Tibial artery (tissue), 4 donors: ENCODE measurements at regions of chr1 and their contacts with region 1.

Region 1: DNA sequence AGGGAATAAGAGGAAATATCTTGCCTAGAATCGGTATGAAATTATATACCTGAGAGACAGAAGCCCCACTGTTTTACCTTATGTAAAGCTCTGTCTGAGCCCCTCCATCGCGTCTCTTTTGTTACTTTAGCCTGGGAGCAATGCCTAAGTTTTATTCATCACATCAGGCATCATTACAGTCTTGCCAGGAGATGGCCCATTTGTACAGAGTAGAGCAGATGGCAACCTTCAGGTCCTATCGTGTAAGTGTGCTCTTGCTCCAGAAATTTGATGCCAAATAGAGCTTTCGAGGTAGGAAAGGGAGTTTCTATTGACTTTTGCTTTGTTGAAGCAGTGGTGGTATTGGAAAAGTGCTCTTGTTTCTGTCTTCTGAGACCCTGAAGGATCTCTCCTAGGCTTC is 24.9 kb downstream of the CFAP126 start:
- DNase-seq: no peak
- H3K4me3 ChIP-seq: no peak overlapping the region
- H3K27ac ChIP-seq: no peak overlapping the region
- H3K4me1 ChIP-seq: no peaks in the 10 kb centered on the region
- H3K27me3 ChIP-seq: no peaks in the 10 kb centered on the region
- CTCF ChIP-seq: no peak

Region 2: DNA sequence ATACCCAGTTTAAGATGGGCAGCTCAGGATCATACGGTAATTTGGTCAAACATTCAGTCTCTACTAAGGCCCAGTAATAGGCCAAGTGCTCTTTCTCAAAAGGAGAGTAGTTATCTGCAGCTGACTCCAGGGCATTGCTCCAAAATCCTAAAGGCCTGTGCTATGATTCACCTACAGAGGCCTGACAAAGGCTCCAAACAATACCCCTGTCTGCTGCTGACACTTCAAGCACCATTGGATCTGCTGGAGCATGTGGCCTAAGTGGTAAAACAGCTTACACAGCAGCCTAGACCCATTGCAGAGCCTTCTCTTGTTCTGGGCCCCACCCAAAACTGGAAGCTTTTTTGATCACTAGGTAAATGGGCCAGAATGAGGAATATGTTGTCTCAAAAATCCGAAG is 580.9 kb before region 1 on chr1:
- intact Hi-C with region 1: loop called (anchors 5 kb)
- DNase-seq: no peak
- H3K4me3 ChIP-seq: no peak overlapping the region
- H3K27ac ChIP-seq: no peak overlapping the region
- H3K4me1 ChIP-seq: no peaks in the 10 kb centered on the region
- H3K27me3 ChIP-seq: no peaks in the 10 kb centered on the region
- CTCF ChIP-seq: no peak

Region 3: DNA sequence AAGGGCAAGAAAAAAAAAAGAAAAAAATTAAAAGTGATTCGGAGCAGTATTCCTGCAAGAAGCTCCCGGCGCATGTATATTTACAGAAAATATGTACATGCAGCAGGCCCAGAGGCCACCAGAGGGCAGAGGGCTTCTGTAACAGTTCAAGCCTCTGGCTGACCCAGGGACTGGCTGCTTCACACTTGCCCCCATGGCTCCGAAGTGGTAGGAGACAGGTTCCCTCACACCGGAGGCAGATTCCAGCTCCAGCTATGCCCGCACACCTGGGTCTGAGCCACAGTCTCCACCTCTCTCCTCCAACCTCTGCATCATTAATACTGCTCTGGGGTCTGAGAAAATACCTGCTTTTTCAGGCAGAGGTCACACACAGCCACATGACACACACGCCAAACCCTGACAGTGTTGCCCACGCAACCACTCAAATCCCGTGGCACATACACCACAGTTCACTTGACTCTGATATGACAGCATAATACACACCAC is 270.9 kb before region 1 on chr1:
- intact Hi-C with region 1: no loop called
- DNase-seq: peak in 1 of 2 donors; percentile 51
- H3K4me3 ChIP-seq: no peak overlapping the region
- H3K27ac ChIP-seq: no peak overlapping the region
- H3K4me1 ChIP-seq: peaks cover 0 to 5% (median 0%) of the 10 kb centered on the region in 4 donors
- H3K27me3 ChIP-seq: peaks cover 0 to 9% of the 10 kb centered on the region in 2 donors
- CTCF ChIP-seq: peak; percentile 17 to 23